GM12878 (cell line): ENCODE measurements at regions of chr2 and their contacts with region 1.

Region 1: DNA sequence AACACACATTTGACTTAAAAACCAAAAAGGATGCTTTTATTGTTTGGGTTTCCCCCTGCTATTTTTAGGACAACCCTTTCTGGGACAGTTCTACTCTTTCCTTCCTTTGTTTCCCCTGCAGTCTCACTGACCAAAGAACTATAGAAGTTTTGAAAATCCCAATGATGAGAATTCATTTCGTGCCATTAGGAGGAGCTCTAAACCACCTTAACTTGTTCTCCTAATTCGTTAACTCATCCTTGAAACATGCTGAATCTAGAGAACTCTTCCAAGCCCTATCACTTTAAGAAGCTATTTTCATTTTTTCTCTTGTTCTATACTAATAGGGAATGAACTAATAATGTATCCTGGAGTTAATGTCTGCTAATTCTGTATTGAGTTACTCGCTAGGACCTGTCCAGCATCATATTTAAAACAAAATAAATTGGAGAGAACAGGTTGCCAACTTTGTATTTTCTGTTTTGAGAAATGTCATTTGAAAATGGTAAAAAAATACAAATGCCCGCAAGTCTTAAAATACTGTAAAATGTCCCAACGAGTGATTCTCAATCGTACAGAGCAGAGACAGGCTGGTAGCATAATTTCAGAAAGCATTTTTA is 62.9 kb downstream of the AFTPH start:
- DNase-seq: no peak
- ATAC-seq: peak; percentile 30
- H3K4me3 ChIP-seq: no peak overlapping the region
- H3K27ac ChIP-seq: no peak overlapping the region
- H3K4me1 ChIP-seq: peaks cover 40% of the 10 kb centered on the region
- H3K27me3 ChIP-seq: no peaks in the 10 kb centered on the region
- CTCF ChIP-seq: peak; percentile 54 to 77 (median 63)
- EP300 ChIP-seq: no peak
- POLR2A ChIP-seq: no peak
- RAD21 ChIP-seq: peak; percentile 83

Region 2: DNA sequence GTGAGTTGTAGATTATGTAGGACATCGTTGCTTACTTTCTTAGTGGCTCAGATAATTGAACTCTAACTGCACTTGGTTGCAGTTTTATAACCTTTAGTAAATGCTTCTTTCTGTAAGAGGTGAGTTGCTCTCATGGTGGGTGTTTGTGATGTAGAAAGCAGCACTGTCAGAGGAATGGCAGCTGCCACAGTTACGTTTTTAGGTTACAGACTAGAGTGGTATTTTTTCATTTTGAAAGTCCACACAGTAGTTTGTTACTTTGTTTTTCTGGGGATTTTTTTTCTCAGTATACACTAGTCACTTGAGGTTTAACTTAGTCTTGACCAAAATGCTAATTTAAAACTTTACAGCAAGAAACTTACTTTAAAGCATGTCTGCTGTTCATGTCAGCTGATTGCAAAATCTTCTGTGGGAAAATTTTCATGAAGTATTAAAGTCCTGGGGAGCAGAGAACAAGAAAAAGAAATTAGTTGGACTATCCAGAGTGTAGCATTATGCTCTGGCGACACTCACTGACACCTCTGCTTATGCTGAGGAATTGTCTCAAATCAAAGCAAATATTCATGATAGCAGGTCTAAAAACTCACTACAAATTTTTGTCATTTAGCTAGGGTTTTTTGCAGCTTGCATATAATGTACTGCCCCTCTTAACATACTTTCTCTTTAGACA is 48.1 kb before region 1 on chr2:
- CTCF ChIA-PET with region 1: interaction called, 12 read pairs
- POLR2A ChIA-PET with region 1: interaction called, 3 read pairs
- RAD21 ChIA-PET with region 1: interaction called, 16 read pairs
- SMC1A ChIA-PET with region 1: interaction called, 5 read pairs
- in situ Hi-C with region 1: no loop called
- intact Hi-C with region 1: no loop called
- DNase-seq: peak; percentile 49
- ATAC-seq: peak; percentile 57
- H3K4me3 ChIP-seq: peak overlapping the region; percentile 14; the same call in 1 of the 2 replicates
- H3K27ac ChIP-seq: peak overlapping the region; percentile 71
- H3K4me1 ChIP-seq: peaks cover 48% of the 10 kb centered on the region; the same call in 1 of the 2 replicates
- H3K27me3 ChIP-seq: no peaks in the 10 kb centered on the region
- CTCF ChIP-seq: no peak
- EP300 ChIP-seq: no peak
- POLR2A ChIP-seq: no peak
- RAD21 ChIP-seq: no peak

Region 3: DNA sequence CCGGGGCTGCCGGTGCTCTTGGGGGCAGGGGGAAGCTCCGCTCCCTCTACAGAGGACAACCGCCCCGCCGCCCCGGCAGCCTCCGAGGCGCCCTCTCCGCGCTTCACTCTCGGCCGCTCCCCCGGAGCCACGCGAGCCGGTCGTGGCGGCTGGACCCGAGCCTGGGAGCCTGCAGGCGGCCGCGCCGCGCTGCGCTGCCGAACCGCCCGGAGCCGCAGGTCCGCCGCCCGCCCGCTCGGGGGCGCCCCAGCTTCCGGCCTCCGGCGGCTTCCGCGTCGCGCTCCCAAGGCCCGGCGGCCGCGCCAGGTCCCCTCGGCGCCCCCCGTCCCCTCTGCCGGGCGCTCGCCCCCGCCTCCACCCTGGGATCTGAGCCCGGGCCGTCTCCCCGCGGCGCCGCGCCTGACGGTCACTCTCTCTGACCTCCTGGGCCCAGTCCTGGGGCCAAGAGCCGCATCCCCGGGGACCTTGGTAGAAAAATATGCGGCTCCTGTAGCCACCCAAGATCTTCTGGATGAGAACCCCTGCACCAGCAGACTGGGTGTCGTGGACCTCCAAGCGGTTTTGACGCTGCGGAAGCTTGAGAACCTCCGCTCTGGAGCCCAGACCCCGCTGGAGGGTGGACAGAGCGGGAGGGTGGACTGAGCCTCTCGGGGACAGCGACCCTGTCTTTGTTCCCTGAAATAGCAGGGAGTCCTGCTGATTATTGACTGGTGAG is 22.4 kb after region 1 on chr2:
- CTCF ChIA-PET with region 1: interaction called, 37 read pairs
- POLR2A ChIA-PET with region 1: interaction called, 21 read pairs
- RAD21 ChIA-PET with region 1: interaction called, 34 read pairs
- SMC1A ChIA-PET with region 1: interaction called, 46 read pairs
- in situ Hi-C with region 1: no loop called
- intact Hi-C with region 1: loop called (anchors 2 kb)
- DNase-seq: no peak
- ATAC-seq: peak; percentile 62
- H3K4me3 ChIP-seq: peak overlapping the region; percentile 68
- H3K27ac ChIP-seq: peak overlapping the region; percentile 14; the same call in 1 of the 2 replicates
- H3K4me1 ChIP-seq: peaks cover 38% of the 10 kb centered on the region
- H3K27me3 ChIP-seq: no peaks in the 10 kb centered on the region
- CTCF ChIP-seq: peak; percentile 30 to 63 (median 33); a peak in 4 of 6 replicates
- EP300 ChIP-seq: no peak
- POLR2A ChIP-seq: peak; percentile 70
- RAD21 ChIP-seq: peak; percentile 42

Region 4: GRCh38 chr2:64831134-64831976 is 244.4 kb after region 1 on chr2:
- CTCF ChIA-PET with region 1: interaction called, 19 read pairs
- POLR2A ChIA-PET with region 1: interaction called, 4 read pairs
- RAD21 ChIA-PET with region 1: interaction called, 7 read pairs
- SMC1A ChIA-PET with region 1: interaction called, 6 read pairs
- in situ Hi-C with region 1: no loop called
- intact Hi-C with region 1: no loop called
- DNase-seq: peak; percentile 71
- ATAC-seq: peak; percentile 96
- H3K4me3 ChIP-seq: peak overlapping the region; percentile 19; the same call in 1 of the 2 replicates
- H3K27ac ChIP-seq: peak overlapping the region; percentile 80
- H3K4me1 ChIP-seq: peaks cover 12% of the 10 kb centered on the region
- H3K27me3 ChIP-seq: no peaks in the 10 kb centered on the region
- CTCF ChIP-seq: peak; percentile 80 to 99 (median 98)
- EP300 ChIP-seq: 0 out of 4 replicates have a peak, but pooled peaks of 1 of the 2 experiments have one; percentile 10
- POLR2A ChIP-seq: no peak; the same call in none of the 2 replicates
- RAD21 ChIP-seq: peak; percentile 85

Region 5: DNA sequence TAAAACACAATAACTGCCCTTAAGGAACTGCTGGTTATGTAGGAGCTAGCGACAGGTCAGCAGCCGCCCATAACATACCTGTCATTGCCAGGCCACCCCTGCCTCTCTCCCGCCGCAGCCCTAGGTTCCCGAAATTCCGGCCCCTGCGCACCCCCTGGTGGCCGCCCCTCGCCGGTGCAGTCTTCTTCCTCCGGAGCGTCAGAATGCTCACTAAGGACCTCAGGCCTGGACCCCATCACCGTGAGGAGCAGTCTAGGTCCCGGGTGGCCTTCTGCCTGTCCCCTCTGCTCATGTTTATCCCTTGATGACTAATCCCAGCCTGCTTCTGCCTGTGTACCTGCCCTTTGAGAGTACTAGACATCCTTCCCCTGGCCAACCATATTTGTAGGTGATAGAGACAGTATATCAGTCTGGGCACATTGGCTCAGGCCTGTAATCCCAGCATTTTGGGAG is 286.5 kb after region 1 on chr2:
- CTCF ChIA-PET with region 1: interaction called, 17 read pairs
- POLR2A ChIA-PET with region 1: no interaction called
- RAD21 ChIA-PET with region 1: interaction called, 18 read pairs
- SMC1A ChIA-PET with region 1: interaction called, 22 read pairs
- in situ Hi-C with region 1: loop called (anchors 10 kb)
- intact Hi-C with region 1: loop called (anchors 2 kb)
- DNase-seq: no peak
- ATAC-seq: peak; percentile 98
- H3K4me3 ChIP-seq: peak overlapping the region; percentile 23; the same call in 1 of the 2 replicates
- H3K27ac ChIP-seq: no peak overlapping the region
- H3K4me1 ChIP-seq: peaks cover 9% of the 10 kb centered on the region
- H3K27me3 ChIP-seq: no peaks in the 10 kb centered on the region
- CTCF ChIP-seq: peak; percentile 94 to 99 (median 98)
- EP300 ChIP-seq: no peak
- POLR2A ChIP-seq: no peak
- RAD21 ChIP-seq: peak; percentile 89